MCF 10A (cell line): ENCODE measurements at regions of chr17 and their contacts with region 1.

Region 1: DNA sequence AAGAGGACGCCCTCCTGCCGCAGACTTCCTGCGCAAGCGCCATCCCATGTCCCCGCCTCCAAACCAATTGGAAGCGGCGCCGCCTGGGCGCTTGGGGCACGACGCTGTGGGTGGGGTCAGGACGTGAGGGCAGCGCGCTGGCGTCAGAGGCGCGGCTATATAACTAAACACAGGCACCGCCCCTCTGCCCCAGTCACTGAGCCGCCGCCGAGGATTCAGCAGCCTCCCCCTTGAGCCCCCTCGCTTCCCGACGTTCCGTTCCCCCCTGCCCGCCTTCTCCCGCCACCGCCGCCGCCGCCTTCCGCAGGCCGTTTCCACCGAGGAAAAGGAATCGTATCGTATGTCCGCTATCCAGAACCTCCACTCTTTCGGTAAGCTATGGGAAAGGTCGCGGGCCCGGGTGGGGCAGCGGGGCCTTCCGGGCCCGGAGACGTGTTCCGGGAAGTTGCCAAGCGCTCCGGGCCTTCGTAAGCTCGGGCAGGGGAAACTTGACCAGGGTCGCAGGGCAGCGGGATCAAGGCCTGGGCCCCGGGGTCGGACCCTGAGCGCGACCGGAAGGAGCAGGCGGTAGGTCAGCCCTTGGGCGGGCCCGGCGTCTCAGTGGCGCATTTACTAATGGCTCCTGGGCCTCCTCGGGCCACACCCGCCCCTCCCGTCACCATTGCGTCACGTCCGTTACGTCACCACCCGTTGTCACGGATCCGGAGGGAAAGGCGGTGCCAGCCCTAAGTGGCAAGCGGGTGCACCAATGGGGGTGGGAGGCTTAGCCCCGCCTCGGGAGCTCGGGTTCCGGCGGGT is at the start of gene EIF1:
- DNase-seq: peak; percentile 100
- H3K4me3 Mint-ChIP-seq: peak within 1 kb of the TSS; percentile 94
- H3K27ac Mint-ChIP-seq: peak within 1 kb of the TSS; percentile 100
- H3K4me1 Mint-ChIP-seq: peaks cover 6% of the 10 kb centered on the region
- H3K27me3 Mint-ChIP-seq: no peaks in the 10 kb centered on the region
- CTCF ChIP-seq: no peak
- total RNA-seq, gene EIF1: 1,945 and 2,169 TPM in 2 replicates

Region 2: DNA sequence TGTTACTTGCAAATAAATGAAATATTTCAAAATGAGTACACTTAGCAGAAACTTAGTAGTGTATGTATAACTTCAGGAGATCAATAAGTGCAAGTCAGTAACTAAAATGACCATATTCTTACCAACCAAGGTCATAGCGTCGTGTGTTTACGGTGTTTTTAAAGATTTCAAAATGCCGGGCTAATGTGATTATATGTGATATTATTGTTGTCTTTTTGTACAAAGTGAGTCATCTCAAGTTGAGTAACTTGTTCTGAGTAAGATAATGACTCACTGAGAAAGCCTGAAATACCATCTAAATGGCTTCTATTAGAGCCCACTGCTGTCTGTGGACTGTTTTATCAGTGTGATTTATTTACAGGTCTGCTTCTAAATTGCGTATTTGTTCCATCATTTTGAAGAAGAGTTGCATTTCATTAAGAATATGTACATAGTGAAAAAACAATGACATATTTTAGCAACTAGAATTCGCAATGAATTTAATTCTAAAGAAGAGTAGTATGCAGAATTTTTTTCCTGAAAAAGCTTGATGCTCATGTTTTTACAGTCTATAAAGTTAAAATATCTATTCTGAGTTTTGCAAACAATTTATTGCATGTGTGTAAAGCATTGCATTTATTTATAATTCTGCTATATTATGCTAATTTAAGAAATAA is 834.6 kb before region 1 on chr17:
- CTCF ChIA-PET with region 1: interaction called, 3 read pairs
- POLR2A ChIA-PET with region 1: interaction called, 27 read pairs
- intact Hi-C with region 1: no loop called
- DNase-seq: peak; percentile 87
- H3K4me3 Mint-ChIP-seq: no peak overlapping the region
- H3K27ac Mint-ChIP-seq: peak overlapping the region; percentile 95
- H3K4me1 Mint-ChIP-seq: peaks cover 38% of the 10 kb centered on the region
- H3K27me3 Mint-ChIP-seq: no peaks in the 10 kb centered on the region
- CTCF ChIP-seq: no peak

Region 3: DNA sequence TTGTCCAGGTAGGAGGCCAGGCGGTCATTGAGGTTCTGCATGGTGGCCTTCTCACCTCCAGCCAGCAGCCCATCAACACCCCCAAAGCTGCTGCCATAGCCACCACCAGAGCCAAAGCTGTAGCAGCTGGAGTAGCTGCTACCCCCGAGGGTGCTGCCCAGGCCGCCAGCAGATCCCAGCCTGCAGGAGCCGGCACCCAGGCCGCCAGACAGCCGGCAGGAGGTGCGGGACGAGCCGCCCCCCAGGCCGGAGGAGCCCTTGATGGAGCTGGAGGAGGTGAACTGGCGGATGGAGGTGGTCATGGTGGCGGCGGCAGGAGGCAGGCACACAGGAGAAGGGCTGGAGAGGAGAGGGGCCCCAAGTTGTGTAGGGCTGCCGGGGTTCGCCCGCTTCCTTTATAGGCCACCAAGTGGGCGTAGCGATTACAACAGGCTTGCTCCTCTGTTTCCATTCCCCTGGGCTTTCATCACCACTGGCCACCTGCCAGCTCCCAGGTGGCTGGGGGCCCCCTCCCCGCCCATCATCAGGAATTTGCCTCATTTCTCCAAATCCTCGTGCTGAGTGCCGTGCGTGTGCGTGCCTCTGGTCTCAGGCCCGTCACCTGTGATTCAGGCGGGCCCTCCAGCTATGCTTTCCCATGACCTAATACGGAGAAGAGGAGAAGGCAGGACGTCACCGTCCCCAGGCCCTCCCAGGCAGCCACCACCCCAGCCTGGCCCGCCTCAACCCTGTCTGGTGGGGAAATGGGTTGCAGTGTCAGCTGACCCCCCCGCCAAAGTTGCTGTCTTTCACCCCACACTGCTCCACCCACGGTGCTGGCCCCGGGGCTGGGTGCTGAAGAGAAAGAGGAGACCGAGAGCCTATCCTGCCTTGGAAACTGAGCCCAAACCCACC is 64.4 kb before region 1 on chr17 and contains the start of gene KRT17:
- CTCF ChIA-PET with region 1: no interaction called
- POLR2A ChIA-PET with region 1: interaction called, 19 read pairs
- intact Hi-C with region 1: no loop called
- DNase-seq: peak; percentile 93
- H3K4me3 Mint-ChIP-seq: peak within 1 kb of the TSS; percentile 86
- H3K27ac Mint-ChIP-seq: peak within 1 kb of the TSS; percentile 89
- H3K4me1 Mint-ChIP-seq: peaks cover 47% of the 10 kb centered on the region
- H3K27me3 Mint-ChIP-seq: no peaks in the 10 kb centered on the region
- CTCF ChIP-seq: peak; percentile 19
- total RNA-seq, gene KRT17: 1,990 and 4,105 TPM in 2 replicates

Region 4: GRCh38 chr17:41665566-41666236 is 23.2 kb before region 1 on chr17:
- CTCF ChIA-PET with region 1: interaction called, 11 read pairs
- POLR2A ChIA-PET with region 1: interaction called, 31 read pairs
- intact Hi-C with region 1: no loop called
- DNase-seq: peak; percentile 78
- H3K4me3 Mint-ChIP-seq: peak overlapping the region; percentile 70
- H3K27ac Mint-ChIP-seq: peak overlapping the region; percentile 66
- H3K4me1 Mint-ChIP-seq: peaks cover 28% of the 10 kb centered on the region
- H3K27me3 Mint-ChIP-seq: no peaks in the 10 kb centered on the region
- CTCF ChIP-seq: peak; percentile 95

Region 5: GRCh38 chr17:41772218-41772585 is 83.3 kb after region 1 on chr17:
- CTCF ChIA-PET with region 1: no interaction called
- POLR2A ChIA-PET with region 1: no interaction called
- intact Hi-C with region 1: no loop called
- DNase-seq: no peak
- H3K4me3 Mint-ChIP-seq: no peak overlapping the region
- H3K27ac Mint-ChIP-seq: peak overlapping the region; percentile 73
- H3K4me1 Mint-ChIP-seq: peaks cover 19% of the 10 kb centered on the region
- H3K27me3 Mint-ChIP-seq: no peaks in the 10 kb centered on the region
- CTCF ChIP-seq: no peak

Region 6: DNA sequence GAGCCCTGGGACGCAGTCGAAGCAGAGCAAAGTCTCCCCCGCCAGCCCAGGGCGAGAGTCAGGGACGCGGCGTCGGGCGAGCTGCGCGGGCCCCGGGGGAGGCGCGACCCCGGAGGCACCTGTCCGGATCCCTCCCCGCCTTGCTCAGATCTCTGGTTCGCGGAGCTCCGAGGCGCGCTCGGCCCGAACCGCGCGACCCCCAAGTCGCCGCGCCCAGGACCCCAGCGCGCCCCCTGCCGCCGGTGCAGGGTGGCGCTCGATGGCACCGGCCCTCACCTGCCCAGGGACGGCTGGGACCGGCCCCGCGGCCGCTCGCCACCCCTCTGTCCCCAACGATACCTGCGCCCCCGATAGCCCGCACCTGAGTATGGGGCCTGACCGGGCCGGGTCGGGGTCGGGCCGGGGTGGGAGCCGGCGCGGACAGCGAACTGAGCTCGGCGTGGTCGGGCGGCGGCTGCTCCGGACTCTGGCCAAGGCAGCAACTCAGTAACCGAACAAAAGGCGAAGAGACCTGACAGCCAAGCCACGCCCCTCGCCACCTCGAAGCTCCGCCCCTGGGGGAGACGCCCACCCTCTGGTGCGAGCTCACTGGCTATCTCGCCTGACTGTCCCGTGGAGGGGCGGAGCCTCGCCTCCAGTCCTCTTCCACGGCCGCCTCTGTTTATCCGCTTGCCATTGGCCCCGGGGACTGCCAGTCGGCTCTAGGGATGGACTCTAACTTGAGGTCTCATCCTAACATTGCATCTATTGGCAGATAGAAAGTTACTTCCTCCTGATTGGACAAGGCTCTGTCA is 97.5 kb after region 1 on chr17 and contains the start of gene JUP:
- CTCF ChIA-PET with region 1: no interaction called
- POLR2A ChIA-PET with region 1: interaction called, 60 read pairs
- intact Hi-C with region 1: no loop called
- DNase-seq: peak; percentile 100
- H3K4me3 Mint-ChIP-seq: peak within 1 kb of the TSS; percentile 74
- H3K27ac Mint-ChIP-seq: peak within 1 kb of the TSS; percentile 70
- H3K4me1 Mint-ChIP-seq: peaks cover 33% of the 10 kb centered on the region
- H3K27me3 Mint-ChIP-seq: no peaks in the 10 kb centered on the region
- CTCF ChIP-seq: peak; percentile 77
- total RNA-seq, gene JUP: 112 and 131 TPM in 2 replicates

Region 7: DNA sequence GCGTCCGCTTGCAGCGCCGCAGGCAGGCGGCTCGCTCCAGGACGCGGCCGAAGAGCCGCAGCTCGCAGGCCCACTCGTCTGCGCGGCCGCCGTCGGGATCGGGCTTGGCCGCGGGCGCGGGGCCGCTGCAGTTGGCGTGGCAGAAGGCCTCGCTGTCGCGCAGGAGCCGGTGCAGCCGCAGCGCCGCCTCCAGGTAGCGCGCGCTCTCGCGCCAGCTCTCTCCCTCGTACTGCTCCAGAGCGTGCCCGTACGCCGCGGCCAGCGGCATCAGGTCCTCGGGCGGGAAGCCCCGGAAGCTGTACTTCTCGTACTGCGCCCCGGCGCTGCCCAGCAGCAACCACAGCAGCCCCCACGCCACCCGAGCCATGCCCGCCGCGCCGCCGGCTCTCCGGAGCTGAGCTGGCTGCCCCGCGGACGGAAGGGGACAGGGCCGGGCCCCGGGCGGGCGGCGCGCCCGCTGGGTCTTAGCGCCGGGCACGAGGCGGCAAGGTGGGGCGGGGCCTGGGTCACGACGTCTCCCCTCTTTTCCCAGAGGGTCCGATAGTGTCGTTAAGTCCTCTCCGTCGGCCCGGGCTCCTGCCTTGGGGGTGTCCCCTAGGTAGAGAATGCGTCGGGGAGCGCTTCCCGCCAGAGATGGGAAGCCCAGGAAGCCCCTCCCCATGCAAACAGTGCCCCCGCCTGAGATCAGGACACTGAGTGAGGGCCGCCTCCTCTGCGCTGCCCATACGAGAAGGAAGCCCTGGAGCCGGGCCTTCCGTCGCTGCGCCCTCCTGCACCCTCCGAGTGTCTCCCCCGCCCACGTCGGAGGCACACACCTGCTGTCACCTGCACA is 122.9 kb after region 1 on chr17 and contains the start of gene P3H4:
- CTCF ChIA-PET with region 1: no interaction called
- POLR2A ChIA-PET with region 1: interaction called, 14 read pairs
- intact Hi-C with region 1: no loop called
- DNase-seq: peak; percentile 74
- H3K4me3 Mint-ChIP-seq: peak within 1 kb of the TSS; percentile 95
- H3K27ac Mint-ChIP-seq: peak within 1 kb of the TSS; percentile 85
- H3K4me1 Mint-ChIP-seq: peaks cover 19% of the 10 kb centered on the region
- H3K27me3 Mint-ChIP-seq: no peaks in the 10 kb centered on the region
- CTCF ChIP-seq: peak; percentile 52
- total RNA-seq, gene P3H4: 36.4 and 41.5 TPM in 2 replicates